HCT116 (cell line): ENCODE measurements at regions of chr6 and their contacts with region 1.

Region 1: GRCh38 chr6:131782764-131783163 is 25.1 kb upstream of the ENPP1 start:
- DNase-seq: no peak
- ATAC-seq: peak; percentile 63
- H3K4me3 ChIP-seq: no peak overlapping the region
- H3K27ac ChIP-seq: no peak overlapping the region
- H3K4me1 ChIP-seq: no peaks in the 10 kb centered on the region
- H3K27me3 ChIP-seq: no peaks in the 10 kb centered on the region
- CTCF ChIP-seq: peak in 2 of 3 experiments; percentile 29 to 47; a peak in 3 of 6 replicates
- POLR2A ChIP-seq: no peak
- RAD21 ChIP-seq: peak; percentile 64

Region 2: DNA sequence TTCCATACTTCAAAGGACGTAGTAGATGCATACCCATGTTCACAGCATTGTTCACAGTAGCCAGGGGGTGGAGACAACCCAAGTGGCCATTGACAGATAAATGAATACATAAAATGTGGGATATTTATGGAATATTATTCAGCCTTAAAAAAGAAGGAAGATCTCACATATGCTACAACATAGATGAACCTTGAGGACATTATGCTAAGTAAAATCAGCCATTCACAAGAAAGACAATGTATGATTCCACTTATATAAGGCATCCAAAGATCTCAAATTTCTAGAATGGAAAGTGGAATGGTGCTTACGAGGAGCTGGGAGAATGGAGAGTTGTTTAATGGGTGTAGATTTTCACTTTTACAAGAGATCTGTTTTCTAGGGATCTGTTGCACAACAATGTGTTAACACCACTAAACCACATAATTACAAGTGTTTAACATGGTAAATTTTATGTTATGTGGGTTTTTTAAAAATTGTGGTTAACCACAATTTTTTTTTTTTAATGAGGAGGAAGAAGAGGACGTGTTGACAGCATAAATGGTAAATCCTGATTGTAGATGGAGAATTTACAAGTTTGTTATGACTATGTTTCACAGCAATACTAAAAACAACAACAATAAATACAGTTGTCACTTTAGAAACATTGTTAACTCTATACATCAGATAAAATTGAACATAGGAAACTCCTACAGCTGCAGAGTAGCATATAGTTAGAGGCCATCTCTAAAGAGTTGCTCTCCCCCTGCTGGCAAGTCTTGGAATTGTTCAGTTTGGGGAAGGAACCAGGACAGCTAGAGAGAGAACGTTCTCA is 126.8 kb after region 1 on chr6:
- CTCF ChIA-PET with region 1: interaction called, 25 read pairs
- POLR2A ChIA-PET with region 1: no interaction called
- RAD21 ChIA-PET with region 1: interaction called, 3 to 5 read pairs
- intact Hi-C with region 1: loop called (anchors 2 kb)
- DNase-seq: peak; percentile 57
- ATAC-seq: peak; percentile 94
- H3K4me3 ChIP-seq: no peak overlapping the region
- H3K27ac ChIP-seq: no peak overlapping the region
- H3K4me1 ChIP-seq: no peaks in the 10 kb centered on the region
- H3K27me3 ChIP-seq: no peaks in the 10 kb centered on the region
- CTCF ChIP-seq: peak; percentile 74 to 82 (median 82)
- POLR2A ChIP-seq: no peak
- RAD21 ChIP-seq: peak; percentile 86